ENCODE measurements at regions of chr2 and their contacts with region 1.

Region 1: DNA sequence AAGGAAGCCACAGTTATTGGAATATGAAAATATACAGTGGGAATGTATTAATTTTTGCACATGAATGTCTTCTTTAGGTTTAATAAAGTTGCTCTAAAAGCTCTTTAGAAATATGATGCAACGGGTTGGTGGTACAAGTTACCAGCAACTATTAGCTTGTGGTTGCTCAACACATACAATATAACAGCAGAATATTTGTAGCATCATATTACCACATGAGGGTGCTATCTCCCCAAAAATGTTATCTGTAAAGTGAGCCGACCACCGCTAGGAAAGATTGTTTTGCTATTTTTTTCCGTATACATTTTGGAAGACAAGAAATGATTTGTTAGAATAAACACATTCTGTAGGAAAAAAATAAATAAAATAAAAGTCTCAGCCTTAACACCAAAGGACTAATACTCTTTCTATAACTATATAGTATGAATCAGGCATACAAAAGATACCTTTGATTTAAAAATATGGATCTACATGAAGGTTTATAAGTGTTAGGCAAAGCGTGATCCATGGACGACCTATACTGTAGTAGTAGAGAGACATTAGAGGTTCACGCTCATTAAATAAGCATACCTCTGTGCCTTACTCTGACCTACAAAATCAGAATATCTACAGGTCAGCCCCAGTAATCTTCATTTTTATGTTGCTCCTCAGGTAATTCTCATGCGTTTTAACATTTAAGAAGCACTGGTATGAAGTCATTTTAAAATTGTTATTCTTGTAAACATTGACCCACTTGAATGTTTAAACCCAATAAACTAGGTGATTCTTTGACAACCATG is 1110.6 kb upstream of the ACVR2A start:
- DNase-seq: no peak
- ATAC-seq: peak; percentile 85 to 94
- H3K4me3 ChIP-seq: no peak overlapping the region
- H3K27ac ChIP-seq: no peak overlapping the region
- H3K4me1 ChIP-seq: peaks cover 0 to 5% of the 10 kb centered on the region in 2 donors
- H3K27me3 ChIP-seq: no peaks in the 10 kb centered on the region
- CTCF ChIP-seq: peak in 4 of 5 experiments; percentile 24 to 59 (median 42)
- POLR2A ChIP-seq: no peak

Region 2: DNA sequence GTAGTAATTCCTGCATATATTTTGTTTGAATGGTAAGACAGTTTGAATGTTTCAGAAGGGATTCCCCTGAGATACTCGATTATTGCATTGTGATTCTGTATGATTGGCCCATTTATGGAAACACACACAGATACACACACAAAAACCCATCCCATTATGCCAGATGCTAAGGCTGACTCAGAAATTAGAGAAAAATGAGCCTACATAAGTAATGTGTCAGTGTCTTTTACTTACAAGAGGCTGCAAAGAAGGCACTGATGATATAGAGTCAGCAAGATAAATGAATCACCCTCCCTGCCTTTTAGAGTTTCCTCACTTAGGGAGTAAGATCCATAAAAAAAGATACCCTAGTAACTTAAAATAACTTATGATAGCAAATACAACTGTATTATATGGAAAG is 370.5 kb before region 1 on chr2:
- in situ Hi-C with region 1: no loop called
- intact Hi-C with region 1: no loop called
- DNase-seq: no peak
- ATAC-seq: no peak
- H3K4me3 ChIP-seq: no peak overlapping the region
- H3K27ac ChIP-seq: no peak overlapping the region
- H3K4me1 ChIP-seq: no peaks in the 10 kb centered on the region
- H3K27me3 ChIP-seq: no peaks in the 10 kb centered on the region
- CTCF ChIP-seq: no peak
- POLR2A ChIP-seq: no peak

Region 3: GRCh38 chr2:146964494-146964893 is 230.3 kb after region 1 on chr2:
- in situ Hi-C with region 1: no loop called
- intact Hi-C with region 1: no loop called
- DNase-seq: no peak
- ATAC-seq: no peak
- H3K4me3 ChIP-seq: no peak overlapping the region
- H3K27ac ChIP-seq: no peak overlapping the region
- H3K4me1 ChIP-seq: no peaks in the 10 kb centered on the region
- H3K27me3 ChIP-seq: no peaks in the 10 kb centered on the region
- CTCF ChIP-seq: no peak
- POLR2A ChIP-seq: no peak

Region 4: DNA sequence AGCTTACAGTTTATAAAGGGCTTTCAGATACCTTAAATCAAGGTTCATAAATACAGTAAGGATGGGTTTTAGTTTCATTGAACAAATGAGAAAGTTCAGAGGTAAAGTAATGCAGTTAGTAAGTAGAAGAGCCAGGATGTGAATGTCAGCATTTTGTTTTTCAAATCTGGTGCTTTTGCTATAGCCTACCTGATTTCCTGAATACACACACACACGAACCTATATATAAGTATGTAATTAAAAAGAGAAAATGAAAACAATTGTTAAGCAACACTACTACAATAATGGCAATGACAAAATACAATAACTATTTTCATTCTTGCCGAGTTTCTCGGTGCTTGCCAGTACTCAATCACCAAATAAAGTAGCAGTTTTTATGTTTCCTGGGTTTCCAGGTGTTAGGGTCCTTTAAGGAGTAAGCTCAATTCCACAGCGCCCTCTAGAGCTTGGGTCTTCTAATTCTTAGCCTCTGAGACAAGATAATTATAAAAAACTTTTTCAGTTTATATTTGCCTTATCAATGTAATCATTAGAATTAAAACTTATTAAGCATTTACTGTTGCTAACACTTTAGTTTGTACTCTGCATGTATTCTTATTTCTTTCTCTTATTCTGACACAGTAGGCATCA is 597.7 kb after region 1 on chr2:
- in situ Hi-C with region 1: no loop called
- intact Hi-C with region 1: loop called (anchors 5 kb)
- DNase-seq: no peak
- ATAC-seq: no peak
- H3K4me3 ChIP-seq: no peak overlapping the region
- H3K27ac ChIP-seq: no peak overlapping the region
- H3K4me1 ChIP-seq: no peaks in the 10 kb centered on the region
- H3K27me3 ChIP-seq: no peaks in the 10 kb centered on the region
- CTCF ChIP-seq: peak in 3 of 5 experiments; percentile 20 to 52 (median 51)
- POLR2A ChIP-seq: no peak

Region 5: DNA sequence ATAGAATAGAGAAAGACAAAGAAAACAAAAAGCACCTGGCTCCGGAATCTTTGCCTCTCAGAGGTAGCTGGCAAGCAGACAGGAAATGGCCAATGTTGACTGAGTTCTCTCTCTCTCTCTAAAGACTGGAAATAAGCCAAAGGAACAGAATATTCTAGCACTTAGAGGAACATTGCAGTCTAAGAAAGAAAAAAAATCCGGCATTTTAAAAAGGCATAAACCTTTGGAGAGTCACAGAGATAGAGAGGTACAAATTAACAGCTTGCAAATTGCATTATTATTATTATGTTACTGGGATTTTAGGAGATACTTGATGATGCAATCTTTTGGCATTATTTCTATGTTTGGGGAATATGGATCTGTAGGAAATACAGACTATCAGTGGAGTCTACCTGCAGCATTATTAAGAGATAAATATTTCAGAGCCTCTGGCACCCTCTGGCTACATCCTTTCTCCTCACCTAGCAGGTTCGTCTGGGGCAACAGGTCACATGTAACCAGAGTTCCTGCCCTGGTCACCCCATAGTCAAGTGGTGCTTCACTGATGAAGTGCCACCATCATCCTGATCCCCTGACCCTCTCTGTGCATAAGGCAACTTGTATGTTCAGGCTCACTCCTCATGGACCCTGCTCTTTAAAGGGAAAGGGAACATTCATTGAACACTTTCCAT is 791.7 kb after region 1 on chr2:
- in situ Hi-C with region 1: no loop called
- intact Hi-C with region 1: loop called (anchors 10 kb)
- DNase-seq: no peak
- ATAC-seq: no peak
- H3K4me3 ChIP-seq: no peak overlapping the region
- H3K27ac ChIP-seq: no peak overlapping the region
- H3K4me1 ChIP-seq: peaks cover 0 to 12% of the 10 kb centered on the region in 2 donors
- H3K27me3 ChIP-seq: no peaks in the 10 kb centered on the region
- CTCF ChIP-seq: no peak
- POLR2A ChIP-seq: no peak

Measured in gastrocnemius medialis (tissue), 4 donors.